ENCODE measurements at regions of chr4 and their contacts with region 1.

Region 1: GRCh38 chr4:74670583-74670982 is 123.7 kb downstream of the BTC start:
- DNase-seq: no peak
- H3K4me3 ChIP-seq: no peak overlapping the region
- H3K27ac ChIP-seq: no peak overlapping the region
- H3K4me1 ChIP-seq: peaks cover 0 to 13% (median 4%) of the 10 kb centered on the region in 4 experiments
- H3K27me3 ChIP-seq: no peaks in the 10 kb centered on the region

Region 2: DNA sequence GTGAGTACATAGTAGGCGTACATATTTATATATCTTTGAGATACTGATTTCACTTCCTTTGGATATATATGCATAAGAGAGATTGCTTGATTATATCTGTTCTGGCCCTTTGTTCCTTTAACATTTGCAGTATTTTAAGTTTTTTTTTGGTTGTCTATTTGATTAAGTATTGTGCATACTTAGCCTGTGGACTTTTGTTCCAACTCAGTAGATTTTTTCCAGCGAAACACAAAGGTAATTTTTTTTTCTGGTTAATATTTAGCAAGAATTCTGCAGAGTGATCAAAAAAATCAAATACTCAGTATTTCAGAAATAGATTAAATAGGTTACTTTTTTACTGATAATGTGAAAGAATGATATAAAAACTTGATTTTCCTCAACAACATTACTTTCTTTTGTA is 1189.2 kb before region 1 on chr4 and contains the start of gene AFM:
- CTCF ChIA-PET with region 1: no interaction called
- POLR2A ChIA-PET with region 1: no interaction called
- DNase-seq: no peak
- H3K4me3 ChIP-seq: no peak within 1 kb of the TSS
- H3K27ac ChIP-seq: no peak within 1 kb of the TSS
- H3K4me1 ChIP-seq: no peaks in the 10 kb centered on the region
- H3K27me3 ChIP-seq: no peaks in the 10 kb centered on the region

Region 3: GRCh38 chr4:74376888-74377483 is 293.6 kb before region 1 on chr4:
- CTCF ChIA-PET with region 1: interaction called, 40 read pairs
- POLR2A ChIA-PET with region 1: no interaction called
- DNase-seq: peak; percentile 65 to 82 (median 81)
- H3K4me3 ChIP-seq: no peak overlapping the region
- H3K27ac ChIP-seq: peak overlapping the region in 1 of 2 experiments; percentile 5
- H3K4me1 ChIP-seq: peaks cover 0 to 24% (median 6%) of the 10 kb centered on the region in 4 experiments
- H3K27me3 ChIP-seq: no peaks in the 10 kb centered on the region

Region 4: GRCh38 chr4:74623041-74623440 is 47.5 kb before region 1 on chr4:
- CTCF ChIA-PET with region 1: interaction called, 42 read pairs
- POLR2A ChIA-PET with region 1: interaction called, 3 read pairs
- DNase-seq: peak; percentile 68 to 85 (median 80)
- H3K4me3 ChIP-seq: no peak overlapping the region
- H3K27ac ChIP-seq: no peak overlapping the region
- H3K4me1 ChIP-seq: peaks cover 6 to 42% (median 17%) of the 10 kb centered on the region in 4 experiments
- H3K27me3 ChIP-seq: no peaks in the 10 kb centered on the region